ENCODE measurements at regions of chr1 and their contacts with region 1.

Region 1: GRCh38 chr1:160376525-160377131 is 9.8 kb downstream of the NHLH1 start:
- DNase-seq: peak; percentile 65 to 76
- ATAC-seq: peak; percentile 80 to 93
- H3K4me3 ChIP-seq: no peak overlapping the region
- H3K27ac ChIP-seq: no peak overlapping the region
- H3K4me1 ChIP-seq: no peaks in the 10 kb centered on the region
- CTCF ChIP-seq: peak; percentile 96
- EP300 ChIP-seq: no peak
- POLR2A ChIP-seq: no peak
- RAD21 ChIP-seq: peak; percentile 84 to 94

Region 2: DNA sequence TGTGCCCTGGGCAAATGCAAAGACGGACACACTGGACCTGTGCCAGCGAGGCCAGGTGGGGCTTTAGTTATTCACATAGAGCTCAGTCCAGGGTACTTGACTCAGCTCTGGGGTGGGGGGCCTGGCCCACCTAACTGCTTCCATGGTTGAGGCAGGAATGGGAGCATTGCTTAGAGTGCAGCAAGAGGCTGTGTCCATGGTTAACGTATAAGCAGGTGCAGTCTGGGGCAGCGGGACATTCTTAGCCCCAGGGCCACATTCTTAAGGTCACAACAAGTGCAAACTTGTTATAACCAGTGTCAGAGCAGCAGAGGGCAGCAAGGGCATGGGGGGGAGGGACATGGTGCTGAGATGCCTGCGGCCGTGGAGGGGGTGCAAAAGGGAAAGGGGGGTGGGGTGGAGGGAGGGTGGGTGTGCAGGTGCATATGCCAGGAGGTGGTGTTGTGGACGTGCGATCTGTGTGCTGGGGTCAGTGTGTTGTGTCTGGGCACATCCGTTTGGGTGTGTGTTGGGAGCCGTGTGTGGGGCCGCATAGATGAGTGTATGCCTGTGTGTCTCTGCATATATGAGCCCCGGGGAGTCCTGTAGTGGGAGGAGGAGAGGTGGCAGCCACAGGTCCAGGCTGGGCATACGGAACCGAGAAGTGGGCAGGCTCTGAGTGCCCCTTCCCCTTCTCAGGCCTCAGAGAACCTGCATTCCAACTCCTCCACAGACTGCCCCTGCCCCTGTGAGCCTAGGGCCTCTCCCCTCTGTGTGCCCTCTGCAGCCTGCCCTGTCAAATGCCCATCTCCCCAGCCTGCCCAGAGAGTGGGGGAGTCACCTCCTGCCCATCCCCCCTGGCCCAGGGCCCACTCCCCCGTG is 315.0 kb before region 1 on chr1:
- CTCF ChIA-PET with region 1: no interaction called
- POLR2A ChIA-PET with region 1: no interaction called
- DNase-seq: no peak
- ATAC-seq: peak in 1 of 2 experiments; percentile 31; a peak in 2 of 6 replicates
- H3K4me3 ChIP-seq: no peak overlapping the region
- H3K27ac ChIP-seq: no peak overlapping the region
- H3K4me1 ChIP-seq: peaks cover 7% of the 10 kb centered on the region; the same call in 2 of the 3 replicates
- CTCF ChIP-seq: no peak
- EP300 ChIP-seq: no peak
- POLR2A ChIP-seq: no peak
- RAD21 ChIP-seq: no peak

Region 3: GRCh38 chr1:160342953-160343869 is 33.4 kb before region 1 on chr1 and contains the starts of genes COPA and NCSTN:
- CTCF ChIA-PET with region 1: interaction called, 13 read pairs
- POLR2A ChIA-PET with region 1: no interaction called
- DNase-seq: peak; percentile 90 to 96
- ATAC-seq: peak; percentile 99 to 100
- H3K4me3 ChIP-seq: peak within 1 kb of the TSS; percentile 93
- H3K27ac ChIP-seq: peak within 1 kb of the TSS; percentile 92 to 93
- H3K4me1 ChIP-seq: peaks cover 20% of the 10 kb centered on the region
- CTCF ChIP-seq: no peak
- EP300 ChIP-seq: no peak
- POLR2A ChIP-seq: peak; percentile 76
- RAD21 ChIP-seq: no peak
- polyA plus RNA-seq, gene COPA: 149 and 188 TPM in 2 replicates
- polyA plus RNA-seq, gene NCSTN: 90.4 and 91.6 TPM in 2 replicates

Region 4: GRCh38 chr1:160354388-160354985 is 22.1 kb before region 1 on chr1:
- CTCF ChIA-PET with region 1: interaction called, 54 read pairs
- POLR2A ChIA-PET with region 1: no interaction called
- DNase-seq: peak; percentile 30 to 48
- ATAC-seq: peak; percentile 65 to 88; a peak in 4 of 6 replicates
- H3K4me3 ChIP-seq: no peak overlapping the region
- H3K27ac ChIP-seq: no peak overlapping the region
- H3K4me1 ChIP-seq: no peaks in the 10 kb centered on the region
- CTCF ChIP-seq: peak; percentile 43
- EP300 ChIP-seq: no peak
- POLR2A ChIP-seq: no peak
- RAD21 ChIP-seq: no peak

Region 5: GRCh38 chr1:160362168-160362957 is 14.3 kb before region 1 on chr1:
- CTCF ChIA-PET with region 1: interaction called, 76 read pairs
- POLR2A ChIA-PET with region 1: interaction called, 5 read pairs
- DNase-seq: no peak
- ATAC-seq: no peak
- H3K4me3 ChIP-seq: no peak overlapping the region
- H3K27ac ChIP-seq: peak overlapping the region; percentile 42 to 65
- H3K4me1 ChIP-seq: peaks cover 10% of the 10 kb centered on the region; the same call in 2 of the 3 replicates
- CTCF ChIP-seq: no peak
- EP300 ChIP-seq: no peak
- POLR2A ChIP-seq: no peak
- RAD21 ChIP-seq: no peak

Region 6: GRCh38 chr1:160407839-160408801 is 31.5 kb after region 1 on chr1:
- CTCF ChIA-PET with region 1: interaction called, 13 read pairs
- POLR2A ChIA-PET with region 1: no interaction called
- DNase-seq: no peak
- ATAC-seq: peak in 1 of 2 experiments; percentile 39; a peak in 2 of 6 replicates
- H3K4me3 ChIP-seq: no peak overlapping the region
- H3K27ac ChIP-seq: peak overlapping the region in 1 of 2 experiments; percentile 28; a peak in 2 of 6 replicates
- H3K4me1 ChIP-seq: peaks cover 19% of the 10 kb centered on the region; the same call in 2 of the 3 replicates
- CTCF ChIP-seq: no peak
- EP300 ChIP-seq: no peak
- POLR2A ChIP-seq: no peak
- RAD21 ChIP-seq: no peak

Region 7: GRCh38 chr1:160428655-160429054 is 52.0 kb after region 1 on chr1:
- CTCF ChIA-PET with region 1: no interaction called
- POLR2A ChIA-PET with region 1: no interaction called
- DNase-seq: peak; percentile 55 to 64
- ATAC-seq: peak; percentile 71 to 94; a peak in 5 of 6 replicates
- H3K4me3 ChIP-seq: no peak overlapping the region
- H3K27ac ChIP-seq: 0 out of 6 replicates have a peak overlapping the region, but pooled peaks of 1 of the 2 experiments have one; percentile 30
- H3K4me1 ChIP-seq: no peaks in the 10 kb centered on the region
- CTCF ChIP-seq: peak; percentile 90
- EP300 ChIP-seq: no peak
- POLR2A ChIP-seq: no peak
- RAD21 ChIP-seq: peak; percentile 95 to 97